Gastrocnemius medialis (tissue), 4 donors: ENCODE measurements at regions of chr9 and their contacts with region 1.

Region 1: DNA sequence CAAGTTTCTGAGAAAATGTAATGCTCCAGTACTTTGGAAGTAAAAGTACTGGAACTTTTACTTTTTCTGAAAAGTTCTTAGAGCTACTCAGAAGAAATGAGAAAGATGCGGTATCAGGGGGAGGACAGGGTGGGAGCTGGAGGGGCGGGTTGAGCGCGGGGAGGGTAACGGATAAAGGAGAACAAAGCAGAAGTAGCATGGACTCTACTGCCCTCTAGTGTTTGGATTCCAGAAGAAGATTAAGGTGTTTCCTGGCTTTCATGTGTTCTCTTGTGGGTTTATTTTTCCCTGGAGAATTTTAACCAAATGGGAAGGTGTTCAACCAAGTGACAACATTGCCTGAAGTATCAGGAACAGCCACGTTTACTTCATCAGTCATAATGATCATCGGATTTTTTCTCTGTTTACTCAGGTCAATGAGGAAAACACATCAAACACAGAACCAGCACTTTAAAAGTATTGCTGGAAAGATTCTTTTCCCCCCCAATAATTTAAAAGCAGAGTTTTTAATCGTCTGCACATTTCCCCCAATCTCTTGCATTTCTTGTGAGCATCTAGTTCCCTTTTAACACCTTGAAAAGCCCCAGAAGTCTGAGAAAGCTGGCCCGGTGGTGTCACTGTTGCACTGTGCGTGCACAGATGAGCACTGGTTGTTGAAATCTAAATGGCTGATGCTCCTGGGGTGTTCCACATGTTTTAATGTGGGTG is 190.6 kb downstream of the MPDZ start:
- DNase-seq: no peak
- ATAC-seq: peak in 1 of 2 donors; percentile 52
- H3K4me3 ChIP-seq: no peak overlapping the region
- H3K27ac ChIP-seq: no peak overlapping the region
- H3K4me1 ChIP-seq: no peaks in the 10 kb centered on the region
- H3K27me3 ChIP-seq: no peaks in the 10 kb centered on the region
- CTCF ChIP-seq: peak; percentile 35 to 78 (median 48)
- POLR2A ChIP-seq: no peak

Region 2: GRCh38 chr9:12702160-12702758 is 386.6 kb before region 1 on chr9:
- in situ Hi-C with region 1: loop called in 1 of 4 experiments (anchors 25 kb)
- intact Hi-C with region 1: no loop called
- DNase-seq: peak in 1 of 2 donors; percentile 19
- ATAC-seq: peak; percentile 55 to 65
- H3K4me3 ChIP-seq: no peak overlapping the region
- H3K27ac ChIP-seq: no peak overlapping the region
- H3K4me1 ChIP-seq: peaks cover 0 to 9% of the 10 kb centered on the region in 2 donors
- H3K27me3 ChIP-seq: no peaks in the 10 kb centered on the region
- CTCF ChIP-seq: peak in 3 of 5 experiments; percentile 24 to 44 (median 40)
- POLR2A ChIP-seq: no peak

Region 3: DNA sequence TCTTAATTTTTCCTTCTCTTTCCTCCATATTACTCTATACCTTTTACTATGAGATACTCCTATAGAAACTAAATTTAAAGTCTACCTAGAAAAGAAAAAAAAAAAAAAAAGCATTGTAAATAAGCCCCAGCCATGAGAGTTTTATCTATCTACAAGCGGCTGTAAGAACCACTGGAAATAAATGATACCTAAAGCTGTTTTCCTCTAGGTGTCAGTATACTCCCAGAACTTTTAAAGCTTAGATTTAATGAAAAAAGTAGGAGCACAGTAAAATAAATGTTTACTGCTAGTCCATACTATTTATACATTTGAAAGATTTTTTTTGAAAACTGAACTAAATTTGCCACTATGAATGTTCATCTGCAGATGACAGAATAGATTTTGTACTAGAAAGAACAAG is 369.4 kb before region 1 on chr9:
- in situ Hi-C with region 1: loop called (anchors 5 to 25 kb)
- intact Hi-C with region 1: loop called (anchors 1 kb)
- DNase-seq: no peak
- ATAC-seq: no peak
- H3K4me3 ChIP-seq: no peak overlapping the region
- H3K27ac ChIP-seq: no peak overlapping the region
- H3K4me1 ChIP-seq: no peaks in the 10 kb centered on the region
- H3K27me3 ChIP-seq: no peaks in the 10 kb centered on the region
- CTCF ChIP-seq: peak in 3 of 5 experiments; percentile 10 to 49 (median 41)
- POLR2A ChIP-seq: no peak

Region 4: GRCh38 chr9:13033959-13034693 is 54.7 kb before region 1 on chr9:
- in situ Hi-C with region 1: no loop called
- intact Hi-C with region 1: loop called (anchors 2 kb)
- DNase-seq: peak; percentile 9 to 19
- ATAC-seq: peak; percentile 58 to 62
- H3K4me3 ChIP-seq: peak overlapping the region in 2 of 4 donors; percentile 8 to 48
- H3K27ac ChIP-seq: no peak overlapping the region
- H3K4me1 ChIP-seq: no peaks in the 10 kb centered on the region
- H3K27me3 ChIP-seq: no peaks in the 10 kb centered on the region
- CTCF ChIP-seq: peak; percentile 49 to 71 (median 59)
- POLR2A ChIP-seq: no peak

Region 5: GRCh38 chr9:13113216-13113615 is 24.3 kb after region 1 on chr9:
- in situ Hi-C with region 1: no loop called
- intact Hi-C with region 1: no loop called
- DNase-seq: no peak
- ATAC-seq: no peak
- H3K4me3 ChIP-seq: no peak overlapping the region
- H3K27ac ChIP-seq: no peak overlapping the region
- H3K4me1 ChIP-seq: peaks cover 0 to 4% of the 10 kb centered on the region in 2 donors
- H3K27me3 ChIP-seq: no peaks in the 10 kb centered on the region
- CTCF ChIP-seq: no peak
- POLR2A ChIP-seq: no peak